ENCODE measurements at regions of chr18 and their contacts with region 1.

Region 1: GRCh38 chr18:42298759-42299675 is 344.0 kb downstream of the PIK3C3 start:
- DNase-seq: peak; percentile 77
- ATAC-seq: no peak
- H3K4me3 Mint-ChIP-seq: no peak overlapping the region
- H3K27ac Mint-ChIP-seq: no peak overlapping the region
- H3K4me1 Mint-ChIP-seq: no peaks in the 10 kb centered on the region
- H3K27me3 Mint-ChIP-seq: peaks cover 6% of the 10 kb centered on the region

Region 2: DNA sequence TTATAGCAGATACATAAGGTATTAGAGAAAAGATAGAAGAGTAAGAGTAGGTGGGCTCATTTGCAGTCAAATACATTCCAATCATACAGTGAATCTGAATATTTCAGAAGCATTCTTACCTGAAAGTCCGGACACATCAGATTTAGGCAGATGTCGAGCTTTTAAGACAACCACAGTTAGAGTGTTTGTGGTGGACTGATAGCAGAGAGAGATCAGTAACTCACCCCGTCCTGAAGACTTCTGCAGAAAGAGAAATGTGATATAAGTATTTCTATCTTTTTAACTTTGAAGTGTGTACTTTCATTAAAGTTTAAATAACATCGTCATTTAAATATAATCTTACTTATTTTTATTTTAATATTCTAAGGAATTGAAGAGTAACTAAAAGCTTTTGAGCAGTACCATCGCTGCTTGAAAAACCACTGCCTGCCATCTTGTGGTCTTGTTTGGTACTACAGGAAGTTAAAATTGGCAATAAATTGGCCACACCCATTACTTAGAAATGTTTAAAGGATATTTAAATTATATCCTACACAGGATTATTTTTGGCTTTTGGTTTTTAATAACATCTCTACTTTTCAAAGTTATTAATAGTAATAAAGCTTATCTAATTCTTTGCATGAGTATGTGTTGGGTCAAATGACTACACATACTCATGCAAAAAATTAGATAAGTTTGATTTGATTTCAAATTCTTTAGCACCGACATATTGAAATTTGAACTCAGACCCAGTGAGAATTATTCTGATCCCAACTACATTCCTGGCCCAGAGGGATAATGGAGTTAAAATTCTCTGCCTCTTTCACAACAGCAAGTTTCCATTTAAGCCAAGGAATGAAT is 972.8 kb after region 1 on chr18:
- CTCF ChIA-PET with region 1: interaction called, 5 read pairs
- POLR2A ChIA-PET with region 1: no interaction called
- intact Hi-C with region 1: loop called (anchors 2 kb)
- DNase-seq: peak; percentile 26
- ATAC-seq: no peak
- H3K4me3 Mint-ChIP-seq: no peak overlapping the region
- H3K27ac Mint-ChIP-seq: no peak overlapping the region
- H3K4me1 Mint-ChIP-seq: no peaks in the 10 kb centered on the region
- H3K27me3 Mint-ChIP-seq: peaks cover 2% of the 10 kb centered on the region

Region 3: DNA sequence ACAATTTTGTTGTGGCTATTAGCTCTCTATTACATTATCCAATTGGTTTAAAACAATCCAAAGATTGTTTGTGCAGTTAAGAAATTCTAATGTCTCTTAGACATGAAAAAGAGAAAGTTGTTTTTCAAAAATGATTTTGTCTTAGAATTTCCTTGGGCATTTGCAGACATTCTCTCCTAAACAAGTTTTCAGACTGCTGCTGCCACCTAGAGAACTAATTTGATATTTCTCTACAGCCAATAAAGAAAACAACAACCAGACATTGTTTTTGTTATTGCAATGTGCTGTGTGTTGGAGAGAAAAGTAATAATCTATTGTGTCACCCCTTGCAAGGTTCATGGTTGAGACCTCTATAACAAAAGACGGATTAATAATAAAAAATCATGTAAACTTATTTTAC is 1097.2 kb after region 1 on chr18:
- CTCF ChIA-PET with region 1: no interaction called
- POLR2A ChIA-PET with region 1: no interaction called
- intact Hi-C with region 1: loop called in 1 of 2 experiments (anchors 5 kb)
- DNase-seq: no peak
- ATAC-seq: no peak
- H3K4me3 Mint-ChIP-seq: no peak overlapping the region
- H3K27ac Mint-ChIP-seq: no peak overlapping the region
- H3K4me1 Mint-ChIP-seq: no peaks in the 10 kb centered on the region
- H3K27me3 Mint-ChIP-seq: no peaks in the 10 kb centered on the region

Region 4: DNA sequence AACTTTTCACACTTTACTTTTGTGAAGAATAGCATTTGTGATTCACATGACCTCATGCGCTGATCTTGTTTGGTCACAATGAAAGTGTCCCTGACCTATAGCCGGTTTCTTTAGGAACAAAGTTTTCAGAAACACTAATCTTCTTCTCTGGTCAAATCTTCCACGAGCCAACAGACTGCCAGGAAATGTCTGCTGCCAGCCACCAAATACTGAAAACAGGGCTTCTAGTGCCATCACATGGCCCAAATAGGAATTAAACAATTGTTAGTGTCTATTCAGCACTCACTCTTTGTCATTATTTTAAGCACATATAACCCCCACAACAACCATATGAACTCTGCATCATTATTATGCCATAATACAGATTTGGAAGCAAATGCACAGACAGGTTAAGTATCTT is 1264.8 kb after region 1 on chr18:
- CTCF ChIA-PET with region 1: no interaction called
- POLR2A ChIA-PET with region 1: no interaction called
- intact Hi-C with region 1: loop called in 1 of 2 experiments (anchors 10 kb)
- DNase-seq: no peak
- ATAC-seq: no peak
- H3K4me3 Mint-ChIP-seq: no peak overlapping the region
- H3K27ac Mint-ChIP-seq: no peak overlapping the region
- H3K4me1 Mint-ChIP-seq: no peaks in the 10 kb centered on the region
- H3K27me3 Mint-ChIP-seq: no peaks in the 10 kb centered on the region

Region 5: GRCh38 chr18:43587538-43588153 is 1288.6 kb after region 1 on chr18:
- CTCF ChIA-PET with region 1: no interaction called
- POLR2A ChIA-PET with region 1: no interaction called
- intact Hi-C with region 1: loop called in 1 of 2 experiments (anchors 2 kb)
- DNase-seq: no peak
- ATAC-seq: peak; percentile 36
- H3K4me3 Mint-ChIP-seq: no peak overlapping the region
- H3K27ac Mint-ChIP-seq: no peak overlapping the region
- H3K4me1 Mint-ChIP-seq: no peaks in the 10 kb centered on the region
- H3K27me3 Mint-ChIP-seq: no peaks in the 10 kb centered on the region